Mammary epithelial cell (primary cell): ENCODE measurements at regions of chr20 and their contacts with region 1.

Region 1: GRCh38 chr20:24337069-24337468 is 132.4 kb upstream of the SYNDIG1 start:
- DNase-seq: peak; percentile 90
- H3K4me3 ChIP-seq: no peak overlapping the region
- H3K27ac ChIP-seq: peak overlapping the region; percentile 17
- H3K4me1 ChIP-seq: peaks cover 68% of the 10 kb centered on the region
- H3K27me3 ChIP-seq: no peaks in the 10 kb centered on the region
- CTCF ChIP-seq: no peak

Region 2: DNA sequence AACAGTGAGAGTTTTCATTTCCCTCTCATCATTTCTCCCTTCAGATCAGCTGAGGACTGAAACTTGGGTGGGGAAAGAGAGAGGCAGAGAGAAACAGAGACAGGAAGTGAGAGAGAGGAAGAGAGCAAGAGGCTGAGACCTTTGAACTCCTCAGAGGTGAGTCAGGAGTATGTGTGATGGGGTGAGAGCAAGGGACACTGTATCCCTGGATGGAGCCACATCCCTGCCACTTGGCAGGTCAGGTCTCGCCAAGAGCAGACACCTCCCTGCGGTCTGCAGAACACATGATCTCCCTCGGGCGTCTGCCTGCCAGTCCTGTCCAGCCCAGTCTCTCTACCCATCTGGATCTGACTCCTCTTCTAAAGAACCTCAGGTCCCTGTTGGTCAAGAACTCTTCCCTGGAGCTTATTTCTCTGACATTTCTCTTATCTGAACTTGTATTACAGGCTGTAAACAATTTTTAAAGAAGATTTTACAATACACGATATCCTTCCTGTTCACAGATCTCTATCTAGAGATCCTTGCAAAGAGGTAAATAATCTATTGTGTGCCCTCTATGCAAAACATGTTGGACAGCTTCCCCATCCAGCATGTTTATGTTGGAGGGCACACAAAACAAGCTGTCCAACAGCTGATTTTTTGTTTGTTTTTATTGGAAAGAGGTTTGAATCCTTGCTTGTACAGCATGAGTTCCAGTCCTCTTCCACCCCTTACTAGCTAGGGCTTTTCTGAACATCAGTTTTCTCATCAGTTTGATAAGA is 69.9 kb after region 1 on chr20:
- CTCF ChIA-PET with region 1: no interaction called
- dilution Hi-C with region 1: loop called (anchors 5 kb)
- in situ Hi-C with region 1: no loop called
- intact Hi-C with region 1: no loop called
- DNase-seq: peak; percentile 78
- H3K4me3 ChIP-seq: no peak overlapping the region
- H3K27ac ChIP-seq: no peak overlapping the region
- H3K4me1 ChIP-seq: peaks cover 14% of the 10 kb centered on the region
- H3K27me3 ChIP-seq: no peaks in the 10 kb centered on the region
- CTCF ChIP-seq: no peak